PC-9 (cell line): ENCODE measurements at regions of chr5 and their contacts with region 1.

Region 1: DNA sequence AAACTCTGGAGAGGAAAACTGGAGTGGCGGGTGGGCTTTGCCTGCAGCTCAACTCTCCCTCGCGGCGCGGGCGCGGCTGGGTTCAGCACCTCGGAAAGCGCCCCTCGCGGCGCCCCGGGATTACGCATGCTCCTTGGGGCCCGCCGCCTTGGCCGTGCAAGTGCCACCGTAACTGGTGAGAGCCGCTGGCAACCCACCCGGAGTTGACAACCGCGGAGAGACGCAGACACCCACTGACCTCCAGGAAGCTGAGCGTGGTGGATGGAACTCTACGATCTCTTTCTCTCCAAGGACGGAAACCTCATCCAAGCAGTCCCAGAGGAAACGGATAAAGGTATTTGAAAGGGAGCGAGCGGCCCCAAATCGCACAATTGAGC is 194 bp upstream of the RXFP3 start:
- DNase-seq: peak in 1 of 2 experiments; percentile 21
- H3K4me3 ChIP-seq: no peak overlapping the region
- H3K27ac ChIP-seq: no peak overlapping the region
- H3K4me1 ChIP-seq: peaks cover 14% of the 10 kb centered on the region
- H3K27me3 ChIP-seq: no peaks in the 10 kb centered on the region
- CTCF ChIP-seq: no peak

Region 2: DNA sequence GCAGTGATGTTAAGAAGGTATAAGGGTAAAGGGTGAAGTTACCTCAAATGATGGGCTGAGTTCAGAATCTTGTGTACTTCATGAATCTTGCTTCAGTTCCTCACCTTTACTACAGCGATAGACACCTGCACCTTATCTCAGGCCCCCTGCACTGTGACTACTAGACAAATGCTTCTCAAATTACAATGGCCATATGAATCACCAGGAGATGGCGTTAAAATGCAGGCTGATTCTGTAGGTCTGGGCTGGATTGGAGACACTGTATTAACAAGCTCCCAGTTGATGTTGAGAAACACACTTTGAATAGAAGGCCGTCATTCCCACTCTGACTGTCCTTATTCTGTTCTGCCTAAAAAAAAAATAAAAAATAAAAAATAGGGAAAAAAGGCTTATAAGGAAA is 465.4 kb before region 1 on chr5:
- CTCF ChIA-PET with region 1: interaction called, 9 read pairs
- POLR2A ChIA-PET with region 1: no interaction called
- intact Hi-C with region 1: loop called (anchors 2 kb)
- DNase-seq: peak in 1 of 2 experiments; percentile 30
- H3K4me3 ChIP-seq: no peak overlapping the region
- H3K27ac ChIP-seq: no peak overlapping the region
- H3K4me1 ChIP-seq: no peaks in the 10 kb centered on the region
- H3K27me3 ChIP-seq: no peaks in the 10 kb centered on the region
- CTCF ChIP-seq: peak; percentile 48

Region 3: GRCh38 chr5:33556330-33557328 is 379.4 kb before region 1 on chr5:
- CTCF ChIA-PET with region 1: no interaction called
- POLR2A ChIA-PET with region 1: no interaction called
- intact Hi-C with region 1: loop called (anchors 10 kb)
- DNase-seq: no peak
- H3K4me3 ChIP-seq: no peak overlapping the region
- H3K27ac ChIP-seq: no peak overlapping the region
- H3K4me1 ChIP-seq: no peaks in the 10 kb centered on the region
- H3K27me3 ChIP-seq: no peaks in the 10 kb centered on the region
- CTCF ChIP-seq: no peak

Region 4: GRCh38 chr5:33736510-33736909 is 199.5 kb before region 1 on chr5:
- CTCF ChIA-PET with region 1: interaction called, 3 read pairs
- POLR2A ChIA-PET with region 1: interaction called, 3 read pairs
- intact Hi-C with region 1: loop called (anchors 10 kb)
- DNase-seq: no peak
- H3K4me3 ChIP-seq: no peak overlapping the region
- H3K27ac ChIP-seq: no peak overlapping the region
- H3K4me1 ChIP-seq: no peaks in the 10 kb centered on the region
- H3K27me3 ChIP-seq: no peaks in the 10 kb centered on the region
- CTCF ChIP-seq: no peak

Region 5: GRCh38 chr5:33850100-33850594 is 85.8 kb before region 1 on chr5:
- CTCF ChIA-PET with region 1: interaction called, 5 read pairs
- POLR2A ChIA-PET with region 1: no interaction called
- intact Hi-C with region 1: loop called (anchors 1 kb)
- DNase-seq: peak; percentile 93 to 97
- H3K4me3 ChIP-seq: peak overlapping the region; percentile 31; the same call in 1 of the 2 replicates
- H3K27ac ChIP-seq: peak overlapping the region; percentile 88
- H3K4me1 ChIP-seq: peaks cover 55% of the 10 kb centered on the region
- H3K27me3 ChIP-seq: no peaks in the 10 kb centered on the region
- CTCF ChIP-seq: no peak

Region 6: DNA sequence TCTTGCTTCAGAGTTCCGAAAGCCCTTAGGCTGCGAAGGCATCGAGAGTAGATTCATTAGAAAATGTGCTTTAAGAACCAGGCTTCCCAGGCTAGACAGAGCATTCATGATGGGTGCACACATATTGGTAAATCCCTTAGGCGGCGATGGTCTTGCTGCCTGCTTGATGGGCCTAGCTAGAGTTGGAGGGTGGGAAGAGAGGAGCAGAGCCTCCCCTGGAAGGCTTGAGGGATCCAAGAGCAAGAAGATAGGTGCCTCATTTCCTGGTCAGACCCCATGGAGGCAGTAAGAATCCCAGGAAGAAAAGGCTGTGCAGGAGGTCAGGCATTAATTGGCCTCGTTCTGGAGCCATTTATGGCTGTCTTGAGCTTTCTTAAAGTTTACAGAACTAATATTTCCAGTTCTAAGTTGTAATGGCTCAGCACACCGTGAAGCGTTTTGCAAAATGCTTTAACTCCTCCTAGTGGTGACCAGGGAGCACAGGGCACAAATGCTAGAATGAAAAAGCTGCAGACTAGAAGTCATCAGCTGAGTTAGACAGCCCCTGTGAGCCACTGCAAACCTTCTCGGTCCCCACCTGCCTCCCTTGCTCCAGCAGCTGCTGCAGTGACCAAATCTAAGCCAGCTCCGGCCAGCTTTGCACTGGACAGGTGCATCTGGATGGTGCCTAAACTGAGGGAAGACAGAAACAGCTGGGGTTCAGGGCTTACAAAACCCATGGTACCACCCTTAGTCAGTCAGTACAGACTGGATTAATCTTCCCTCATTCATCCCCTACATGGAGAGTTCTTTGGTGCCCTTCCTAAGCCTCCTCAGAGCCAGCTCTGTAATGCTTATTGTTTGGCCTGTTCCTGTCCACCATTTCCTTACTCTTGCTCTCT is 33.8 kb after region 1 on chr5:
- CTCF ChIA-PET with region 1: interaction called, 12 read pairs
- POLR2A ChIA-PET with region 1: no interaction called
- intact Hi-C with region 1: loop called (anchors 1 kb)
- DNase-seq: peak; percentile 59 to 64
- H3K4me3 ChIP-seq: no peak overlapping the region
- H3K27ac ChIP-seq: no peak overlapping the region
- H3K4me1 ChIP-seq: 0 out of 2 replicates have a peak, but pooled peaks cover 3% of the 10 kb centered on the region
- H3K27me3 ChIP-seq: no peaks in the 10 kb centered on the region
- CTCF ChIP-seq: peak; percentile 90